H1 (cell line): ENCODE measurements at regions of chr1 and their contacts with region 1.

Region 1: DNA sequence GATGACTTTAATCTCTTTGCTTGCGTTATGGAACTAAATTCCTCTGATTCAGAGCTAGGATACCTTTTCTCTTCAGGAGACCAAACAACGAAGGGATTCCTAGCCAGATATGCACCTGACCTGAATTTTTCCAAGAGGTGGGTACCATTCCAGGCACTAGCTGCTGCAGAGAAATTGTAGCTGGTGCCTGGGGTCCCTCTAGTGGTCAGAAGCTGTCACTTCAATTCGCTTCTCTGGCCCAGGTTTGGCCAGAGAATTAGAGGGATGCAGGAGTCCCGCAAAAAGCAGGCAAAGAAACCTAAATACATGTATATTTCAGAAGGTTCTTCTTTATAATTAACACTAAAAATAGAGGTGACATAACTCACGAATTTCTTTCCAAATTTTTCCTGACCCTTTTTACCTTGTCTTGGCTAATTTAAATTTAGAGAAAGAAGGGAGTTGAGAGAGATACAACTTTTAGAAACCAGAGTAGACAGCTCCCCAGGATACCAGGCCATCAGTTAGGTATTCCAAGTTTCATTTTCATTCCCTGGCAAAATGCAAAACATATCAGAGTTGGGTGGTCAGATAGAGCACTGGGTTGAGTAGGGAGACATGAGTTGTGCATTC is 9.6 kb downstream of the ACKR1 start:
- DNase-seq: peak in 1 of 2 experiments; percentile 65
- H3K4me3 ChIP-seq: no peak overlapping the region
- H3K27ac ChIP-seq: no peak overlapping the region
- H3K4me1 ChIP-seq: peaks cover 6 to 14% (median 11%) of the 10 kb centered on the region in 4 experiments
- H3K27me3 ChIP-seq: no peaks in the 10 kb centered on the region
- CTCF ChIP-seq: peak; percentile 77 to 89 (median 88)
- EP300 ChIP-seq: no peak
- POLR2A ChIP-seq: no peak
- RAD21 ChIP-seq: peak; percentile 82 to 85

Region 2: DNA sequence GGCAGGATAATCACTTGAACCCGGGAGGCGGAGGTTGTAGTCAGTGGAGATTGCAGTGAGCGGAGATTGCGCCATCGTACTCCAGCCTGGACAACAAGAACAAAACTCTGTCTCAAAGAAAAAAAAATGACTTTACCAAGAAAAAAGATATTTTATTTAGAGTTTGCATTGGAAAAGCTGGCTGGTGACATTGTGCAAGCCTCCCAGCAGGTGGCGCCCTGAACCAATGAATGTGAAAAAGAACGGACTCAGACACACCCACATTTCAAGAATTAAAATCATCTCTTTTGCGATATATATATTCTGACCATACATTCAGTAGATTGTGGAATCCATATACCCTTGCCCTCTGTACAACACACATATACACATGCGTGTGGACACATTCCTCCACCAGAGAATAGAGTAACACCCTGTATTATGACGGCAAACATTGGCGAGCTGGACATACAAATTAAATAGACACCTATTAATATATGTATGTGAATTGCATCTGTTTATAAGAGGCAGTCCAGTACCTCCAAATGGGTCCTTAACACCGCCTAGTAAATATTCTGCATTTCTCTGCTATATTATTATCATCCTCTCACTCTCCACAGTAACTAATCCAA is 81.9 kb before region 1 on chr1:
- CTCF ChIA-PET with region 1: interaction called, 660 read pairs
- POLR2A ChIA-PET with region 1: no interaction called
- DNase-seq: peak in 1 of 2 experiments; percentile 80
- H3K4me3 ChIP-seq: no peak overlapping the region
- H3K27ac ChIP-seq: no peak overlapping the region
- H3K4me1 ChIP-seq: no peaks in the 10 kb centered on the region
- H3K27me3 ChIP-seq: no peaks in the 10 kb centered on the region; a peak in 1 of 7 replicates
- CTCF ChIP-seq: peak; percentile 64 to 73 (median 70)
- EP300 ChIP-seq: no peak
- POLR2A ChIP-seq: no peak
- RAD21 ChIP-seq: peak; percentile 83 to 85

Region 3: GRCh38 chr1:159177273-159177907 is 36.9 kb before region 1 on chr1:
- CTCF ChIA-PET with region 1: interaction called, 10 read pairs
- POLR2A ChIA-PET with region 1: interaction called, 3 read pairs
- DNase-seq: peak in 1 of 2 experiments; percentile 74
- H3K4me3 ChIP-seq: no peak overlapping the region
- H3K27ac ChIP-seq: no peak overlapping the region
- H3K4me1 ChIP-seq: peaks cover 3 to 13% (median 3%) of the 10 kb centered on the region in 4 experiments; a peak in 6 of 7 replicates
- H3K27me3 ChIP-seq: no peaks in the 10 kb centered on the region
- CTCF ChIP-seq: no peak
- EP300 ChIP-seq: no peak
- POLR2A ChIP-seq: no peak
- RAD21 ChIP-seq: 0 out of 4 replicates have a peak, but pooled peaks of 1 of the 2 experiments have one; percentile 4

Region 4: GRCh38 chr1:159197561-159198557 is 16.4 kb before region 1 on chr1:
- CTCF ChIA-PET with region 1: interaction called, 382 read pairs
- POLR2A ChIA-PET with region 1: no interaction called
- DNase-seq: peak in 1 of 2 experiments; percentile 89
- H3K4me3 ChIP-seq: no peak overlapping the region
- H3K27ac ChIP-seq: no peak overlapping the region
- H3K4me1 ChIP-seq: no peaks in the 10 kb centered on the region
- H3K27me3 ChIP-seq: no peaks in the 10 kb centered on the region
- CTCF ChIP-seq: peak; percentile 85 to 99 (median 98)
- EP300 ChIP-seq: no peak
- POLR2A ChIP-seq: no peak
- RAD21 ChIP-seq: peak; percentile 77 to 82

Region 5: GRCh38 chr1:159274631-159275030 is 60.4 kb after region 1 on chr1:
- CTCF ChIA-PET with region 1: no interaction called
- POLR2A ChIA-PET with region 1: no interaction called
- DNase-seq: no peak
- H3K4me3 ChIP-seq: no peak overlapping the region
- H3K27ac ChIP-seq: no peak overlapping the region
- H3K4me1 ChIP-seq: no peaks in the 10 kb centered on the region
- H3K27me3 ChIP-seq: no peaks in the 10 kb centered on the region
- CTCF ChIP-seq: no peak
- EP300 ChIP-seq: no peak
- POLR2A ChIP-seq: no peak
- RAD21 ChIP-seq: no peak

Region 6: DNA sequence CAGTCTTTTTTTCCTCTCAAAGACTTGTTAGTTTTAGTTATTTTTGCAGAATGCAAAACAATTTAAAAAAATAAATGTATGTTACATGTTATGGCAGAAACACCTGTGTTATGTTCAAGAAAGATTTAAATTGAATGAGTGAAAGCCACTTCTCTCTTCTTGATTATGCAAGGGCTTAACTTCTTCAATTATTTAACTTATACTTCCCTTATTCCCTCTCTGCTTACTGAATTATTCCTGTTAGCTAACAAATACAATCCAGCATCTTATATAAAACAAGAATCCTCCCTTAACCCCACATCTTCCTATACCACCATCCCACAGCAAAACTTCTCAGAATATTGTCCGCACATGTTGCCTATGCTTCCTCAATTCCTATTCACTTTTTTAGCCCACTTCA is 77.2 kb after region 1 on chr1:
- CTCF ChIA-PET with region 1: no interaction called
- POLR2A ChIA-PET with region 1: no interaction called
- DNase-seq: no peak
- H3K4me3 ChIP-seq: no peak overlapping the region
- H3K27ac ChIP-seq: no peak overlapping the region
- H3K4me1 ChIP-seq: no peaks in the 10 kb centered on the region
- H3K27me3 ChIP-seq: no peaks in the 10 kb centered on the region
- CTCF ChIP-seq: no peak
- EP300 ChIP-seq: no peak
- POLR2A ChIP-seq: no peak
- RAD21 ChIP-seq: no peak